Dorsolateral prefrontal cortex (tissue), 120 donors: ENCODE measurements at regions of chr18 and their contacts with region 1.

Region 1: GRCh38 chr18:79528846-79529245 is 133.1 kb downstream of the NFATC1 start:
- DNase-seq: peak in 8 of 10 donors; percentile 45 to 81 (median 53)
- H3K4me3 ChIP-seq: no peak overlapping the region
- H3K27ac ChIP-seq: no peak overlapping the region
- H3K27me3 ChIP-seq: peaks cover 0 to 59% (median 11%) of the 10 kb centered on the region in 45 donors
- CTCF ChIP-seq: peak; percentile 60 to 94 (median 82)

Region 2: DNA sequence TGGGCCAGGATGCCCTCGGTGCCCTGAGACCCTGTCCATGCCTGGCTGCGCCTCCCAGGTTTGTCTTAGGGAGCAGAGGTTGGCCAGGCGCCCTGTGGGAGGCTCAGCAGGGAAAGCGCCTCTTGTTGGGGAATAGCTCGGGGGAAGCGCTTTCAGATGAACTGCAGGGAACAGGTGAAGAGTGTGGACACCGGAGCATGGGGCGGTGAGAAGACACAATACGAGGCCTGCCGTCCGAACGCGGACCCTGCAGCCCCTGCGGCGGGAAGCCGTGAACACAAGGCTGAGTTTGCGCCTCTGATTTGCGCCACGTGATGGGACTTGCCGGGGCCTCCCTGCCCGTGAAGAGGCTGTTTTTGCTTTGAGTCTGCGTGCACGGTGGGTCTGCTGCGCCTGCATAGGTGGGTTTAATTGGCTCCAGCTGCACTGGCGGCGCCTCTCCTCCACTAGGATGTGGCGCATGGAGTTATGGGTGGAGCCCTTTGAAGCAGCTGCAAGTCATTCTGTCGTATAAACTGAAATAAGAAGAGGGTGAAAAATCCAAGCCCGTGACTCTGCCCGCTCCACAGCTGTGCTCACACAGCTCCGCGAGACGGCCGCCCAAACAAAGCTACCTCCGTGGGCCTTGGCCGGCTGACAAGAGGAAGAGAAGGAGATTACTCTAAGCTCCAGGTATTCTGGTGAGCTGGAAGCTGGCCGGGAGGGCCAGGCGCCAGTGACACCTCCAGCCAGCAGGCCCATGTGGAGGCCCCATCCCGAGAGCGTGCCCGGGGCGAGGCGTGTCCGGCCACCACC is 47.2 kb after region 1 on chr18:
- intact Hi-C with region 1: loop called in 1 of 2 experiments (anchors 5 kb)
- DNase-seq: peak in 4 of 10 donors; percentile 31 to 56 (median 34)
- H3K4me3 ChIP-seq: peak overlapping the region in 30 of 59 donors; percentile 2 to 50 (median 26)
- H3K27ac ChIP-seq: peak overlapping the region in 21 of 59 donors; percentile 5 to 77 (median 40)
- H3K27me3 ChIP-seq: no peaks in the 10 kb centered on the region
- CTCF ChIP-seq: no peak

Region 3: GRCh38 chr18:79644006-79644665 is 115.3 kb after region 1 on chr18:
- intact Hi-C with region 1: loop called (anchors 2 to 10 kb)
- DNase-seq: peak in 7 of 10 donors; percentile 29 to 79 (median 56)
- H3K4me3 ChIP-seq: peak overlapping the region in 22 of 59 donors; percentile 8 to 49 (median 22)
- H3K27ac ChIP-seq: no peak overlapping the region
- H3K27me3 ChIP-seq: peaks cover 0 to 18% (median under 1%) of the 10 kb centered on the region in 45 donors
- CTCF ChIP-seq: peak; percentile 76 to 100 (median 97)